Endothelial cell of umbilical vein (primary cell): ENCODE measurements at regions of chr10 and their contacts with region 1.

Region 1: DNA sequence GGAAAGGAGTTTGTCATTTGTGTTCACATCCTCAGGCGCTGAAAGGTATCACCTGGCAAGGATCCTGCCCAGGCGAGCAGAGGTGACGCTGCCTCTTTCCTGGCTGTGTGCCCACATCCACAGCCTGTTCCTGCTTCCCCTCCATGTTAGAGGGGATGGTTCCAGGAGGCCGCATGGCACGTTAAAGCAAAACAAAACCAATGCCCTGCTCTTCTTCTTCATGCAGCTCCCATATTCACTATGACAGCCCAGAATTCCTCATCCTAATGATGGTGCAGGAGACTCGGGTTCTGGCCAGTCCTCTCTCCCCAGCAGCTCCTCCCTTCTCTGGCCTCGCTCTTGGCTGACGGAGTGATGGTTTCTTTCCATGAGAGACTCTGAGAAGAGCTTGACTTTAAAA is 678.5 kb upstream of the ANKRD30A start:
- DNase-seq: peak; percentile 55
- H3K4me3 ChIP-seq: no peak overlapping the region
- H3K27ac ChIP-seq: no peak overlapping the region
- H3K4me1 ChIP-seq: peaks cover 12% of the 10 kb centered on the region
- H3K27me3 ChIP-seq: no peaks in the 10 kb centered on the region
- CTCF ChIP-seq: no peak
- POLR2A ChIP-seq: no peak

Region 2: DNA sequence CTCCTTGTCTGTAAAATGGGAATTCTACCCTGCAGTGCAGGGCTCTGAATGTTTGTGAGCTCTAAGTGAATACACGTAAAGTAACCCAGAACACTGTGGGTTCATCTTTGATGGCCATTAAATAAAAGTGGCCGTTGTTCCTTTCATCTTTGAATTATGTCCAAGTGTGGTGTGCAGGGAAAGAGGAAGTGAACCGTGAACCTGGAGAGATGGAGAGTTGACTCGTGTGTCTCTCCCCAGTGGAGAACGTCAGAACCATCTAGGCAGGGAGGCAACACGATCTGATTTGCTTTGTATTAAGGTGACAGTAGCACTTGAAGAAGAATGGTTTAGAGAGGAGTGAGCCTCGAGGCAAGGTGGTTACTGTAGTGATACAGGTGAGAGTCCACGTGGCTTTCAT is 935.2 kb before region 1 on chr10:
- CTCF ChIA-PET with region 1: no interaction called
- POLR2A ChIA-PET with region 1: no interaction called
- dilution Hi-C with region 1: no loop called
- intact Hi-C with region 1: no loop called
- DNase-seq: no peak
- H3K4me3 ChIP-seq: no peak overlapping the region
- H3K27ac ChIP-seq: no peak overlapping the region
- H3K4me1 ChIP-seq: peaks cover 7% of the 10 kb centered on the region
- H3K27me3 ChIP-seq: no peaks in the 10 kb centered on the region
- CTCF ChIP-seq: no peak
- POLR2A ChIP-seq: no peak

Region 3: DNA sequence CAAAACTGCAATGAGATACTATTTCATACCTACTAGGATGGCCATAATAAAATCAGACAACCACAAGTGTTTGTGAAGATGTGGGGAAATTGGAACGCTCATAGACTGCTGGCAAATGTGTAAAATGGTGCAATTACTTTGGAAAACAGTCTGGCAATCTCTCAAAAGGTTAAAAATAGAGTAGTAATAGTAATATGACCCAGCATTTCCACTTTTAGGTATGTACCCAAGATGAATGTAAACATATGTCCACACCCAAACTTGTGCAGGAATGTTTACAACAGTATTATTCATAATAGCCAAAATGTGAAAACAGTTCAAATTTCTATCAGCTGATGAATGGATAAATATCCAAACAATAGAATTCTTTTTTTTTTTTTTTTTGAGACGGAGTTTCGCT is 53.1 kb before region 1 on chr10:
- CTCF ChIA-PET with region 1: no interaction called
- POLR2A ChIA-PET with region 1: interaction called, 16 read pairs
- dilution Hi-C with region 1: no loop called
- intact Hi-C with region 1: no loop called
- DNase-seq: no peak
- H3K4me3 ChIP-seq: no peak overlapping the region
- H3K27ac ChIP-seq: no peak overlapping the region
- H3K4me1 ChIP-seq: no peaks in the 10 kb centered on the region
- H3K27me3 ChIP-seq: no peaks in the 10 kb centered on the region
- CTCF ChIP-seq: no peak
- POLR2A ChIP-seq: no peak

Region 4: GRCh38 chr10:36559412-36560400 is 112.8 kb after region 1 on chr10:
- CTCF ChIA-PET with region 1: no interaction called
- POLR2A ChIA-PET with region 1: no interaction called
- dilution Hi-C with region 1: no loop called
- intact Hi-C with region 1: no loop called
- DNase-seq: no peak
- H3K4me3 ChIP-seq: no peak overlapping the region
- H3K27ac ChIP-seq: no peak overlapping the region
- H3K4me1 ChIP-seq: no peaks in the 10 kb centered on the region
- H3K27me3 ChIP-seq: no peaks in the 10 kb centered on the region
- CTCF ChIP-seq: no peak
- POLR2A ChIP-seq: no peak